Caco-2 (cell line): ENCODE measurements at regions of chr4 and their contacts with region 1.

Region 1: GRCh38 chr4:70687821-70688794 is at the start of gene UTP3:
- DNase-seq: peak; percentile 93 to 94
- H3K4me3 ChIP-seq: peak within 1 kb of the TSS; percentile 85
- H3K4me3 Mint-ChIP-seq: peak within 1 kb of the TSS; percentile 96
- H3K27ac Mint-ChIP-seq: peak within 1 kb of the TSS; percentile 88
- H3K4me1 ChIP-seq: peaks cover 6% of the 10 kb centered on the region; the same call in 1 of the 2 replicates
- H3K4me1 Mint-ChIP-seq: peaks cover 16% of the 10 kb centered on the region
- H3K27me3 ChIP-seq: no peaks in the 10 kb centered on the region
- H3K27me3 Mint-ChIP-seq: no peaks in the 10 kb centered on the region
- CTCF ChIP-seq: peak; percentile 77 to 89
- total RNA-seq, gene UTP3: 28.2 and 31.4 TPM in 2 replicates

Region 2: DNA sequence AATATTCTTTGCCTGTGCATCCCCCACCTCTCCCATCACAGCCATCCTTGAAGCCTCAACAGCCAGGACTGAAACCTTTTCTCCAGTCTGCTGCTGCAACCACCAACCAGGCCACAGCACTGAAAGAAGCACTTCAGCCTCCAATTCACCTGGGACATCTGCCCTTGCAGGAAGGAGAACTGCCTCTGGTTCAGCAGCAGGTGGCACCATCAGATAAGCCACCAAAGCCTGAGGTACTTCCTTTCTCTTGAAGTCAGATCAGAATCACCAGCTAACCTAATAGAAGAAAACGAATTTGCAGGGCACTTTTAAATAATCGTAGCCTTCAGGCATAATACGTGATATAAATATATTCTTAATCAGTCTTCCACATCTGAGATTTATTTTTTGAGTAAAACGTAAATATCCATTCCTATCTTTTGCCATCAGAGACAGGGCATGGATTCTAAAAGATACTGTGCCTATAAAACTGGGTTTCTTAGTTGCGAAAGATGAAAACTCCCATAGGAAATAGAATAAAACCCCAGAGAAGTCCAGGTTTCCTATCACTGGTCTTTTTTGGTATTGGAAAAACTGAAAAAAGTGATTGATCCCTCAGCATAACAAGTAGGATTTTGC is 86.6 kb before region 1 on chr4:
- CTCF ChIA-PET with region 1: no interaction called
- POLR2A ChIA-PET with region 1: no interaction called
- intact Hi-C with region 1: loop called (anchors 5 kb)
- DNase-seq: peak; percentile 64 to 69
- H3K4me3 ChIP-seq: no peak overlapping the region
- H3K4me3 Mint-ChIP-seq: no peak overlapping the region
- H3K27ac Mint-ChIP-seq: no peak overlapping the region
- H3K4me1 ChIP-seq: peaks cover 4% of the 10 kb centered on the region; the same call in 1 of the 2 replicates
- H3K4me1 Mint-ChIP-seq: peaks cover 6% of the 10 kb centered on the region
- H3K27me3 ChIP-seq: no peaks in the 10 kb centered on the region
- H3K27me3 Mint-ChIP-seq: no peaks in the 10 kb centered on the region
- CTCF ChIP-seq: peak; percentile 64 to 73

Region 3: GRCh38 chr4:70651864-70652506 is 36.1 kb before region 1 on chr4:
- CTCF ChIA-PET with region 1: no interaction called
- POLR2A ChIA-PET with region 1: no interaction called
- intact Hi-C with region 1: loop called (anchors 1 kb)
- DNase-seq: peak in 1 of 2 experiments; percentile 20
- H3K4me3 ChIP-seq: no peak overlapping the region
- H3K4me3 Mint-ChIP-seq: no peak overlapping the region
- H3K27ac Mint-ChIP-seq: no peak overlapping the region
- H3K4me1 ChIP-seq: peaks cover 3% of the 10 kb centered on the region; the same call in 1 of the 2 replicates
- H3K4me1 Mint-ChIP-seq: peaks cover 7% of the 10 kb centered on the region
- H3K27me3 ChIP-seq: no peaks in the 10 kb centered on the region
- H3K27me3 Mint-ChIP-seq: no peaks in the 10 kb centered on the region
- CTCF ChIP-seq: peak in 1 of 2 experiments; percentile 31

Region 4: GRCh38 chr4:70704331-70705145 is 16.4 kb after region 1 on chr4:
- CTCF ChIA-PET with region 1: interaction called, 8 read pairs
- POLR2A ChIA-PET with region 1: interaction called, 7 read pairs
- intact Hi-C with region 1: loop called (anchors 1 kb)
- DNase-seq: peak; percentile 88 to 90
- H3K4me3 ChIP-seq: peak overlapping the region; percentile 79
- H3K4me3 Mint-ChIP-seq: peak overlapping the region; percentile 98
- H3K27ac Mint-ChIP-seq: peak overlapping the region; percentile 98
- H3K4me1 ChIP-seq: peaks cover 11% of the 10 kb centered on the region
- H3K4me1 Mint-ChIP-seq: peaks cover 6% of the 10 kb centered on the region
- H3K27me3 ChIP-seq: no peaks in the 10 kb centered on the region
- H3K27me3 Mint-ChIP-seq: no peaks in the 10 kb centered on the region
- CTCF ChIP-seq: peak; percentile 30 to 63

Region 5: GRCh38 chr4:70839589-70840093 is 151.5 kb after region 1 on chr4 and contains the start of gene GRSF1:
- CTCF ChIA-PET with region 1: no interaction called
- POLR2A ChIA-PET with region 1: no interaction called
- intact Hi-C with region 1: loop called (anchors 1 kb)
- DNase-seq: peak; percentile 93 to 95
- H3K4me3 ChIP-seq: peak within 1 kb of the TSS; percentile 88
- H3K4me3 Mint-ChIP-seq: peak within 1 kb of the TSS; percentile 98
- H3K27ac Mint-ChIP-seq: peak within 1 kb of the TSS; percentile 90
- H3K4me1 ChIP-seq: no peaks in the 10 kb centered on the region
- H3K4me1 Mint-ChIP-seq: peaks cover 9% of the 10 kb centered on the region
- H3K27me3 ChIP-seq: no peaks in the 10 kb centered on the region
- H3K27me3 Mint-ChIP-seq: no peaks in the 10 kb centered on the region
- CTCF ChIP-seq: no peak
- total RNA-seq, gene GRSF1: 72.3 and 76.1 TPM in 2 replicates

Region 6: GRCh38 chr4:70880739-70881138 is 192.6 kb after region 1 on chr4:
- CTCF ChIA-PET with region 1: no interaction called
- POLR2A ChIA-PET with region 1: interaction called, 14 read pairs
- intact Hi-C with region 1: no loop called
- DNase-seq: no peak
- H3K4me3 ChIP-seq: no peak overlapping the region
- H3K4me3 Mint-ChIP-seq: no peak overlapping the region
- H3K27ac Mint-ChIP-seq: no peak overlapping the region
- H3K4me1 ChIP-seq: no peaks in the 10 kb centered on the region
- H3K4me1 Mint-ChIP-seq: no peaks in the 10 kb centered on the region
- H3K27me3 ChIP-seq: no peaks in the 10 kb centered on the region
- H3K27me3 Mint-ChIP-seq: no peaks in the 10 kb centered on the region
- CTCF ChIP-seq: no peak

Region 7: DNA sequence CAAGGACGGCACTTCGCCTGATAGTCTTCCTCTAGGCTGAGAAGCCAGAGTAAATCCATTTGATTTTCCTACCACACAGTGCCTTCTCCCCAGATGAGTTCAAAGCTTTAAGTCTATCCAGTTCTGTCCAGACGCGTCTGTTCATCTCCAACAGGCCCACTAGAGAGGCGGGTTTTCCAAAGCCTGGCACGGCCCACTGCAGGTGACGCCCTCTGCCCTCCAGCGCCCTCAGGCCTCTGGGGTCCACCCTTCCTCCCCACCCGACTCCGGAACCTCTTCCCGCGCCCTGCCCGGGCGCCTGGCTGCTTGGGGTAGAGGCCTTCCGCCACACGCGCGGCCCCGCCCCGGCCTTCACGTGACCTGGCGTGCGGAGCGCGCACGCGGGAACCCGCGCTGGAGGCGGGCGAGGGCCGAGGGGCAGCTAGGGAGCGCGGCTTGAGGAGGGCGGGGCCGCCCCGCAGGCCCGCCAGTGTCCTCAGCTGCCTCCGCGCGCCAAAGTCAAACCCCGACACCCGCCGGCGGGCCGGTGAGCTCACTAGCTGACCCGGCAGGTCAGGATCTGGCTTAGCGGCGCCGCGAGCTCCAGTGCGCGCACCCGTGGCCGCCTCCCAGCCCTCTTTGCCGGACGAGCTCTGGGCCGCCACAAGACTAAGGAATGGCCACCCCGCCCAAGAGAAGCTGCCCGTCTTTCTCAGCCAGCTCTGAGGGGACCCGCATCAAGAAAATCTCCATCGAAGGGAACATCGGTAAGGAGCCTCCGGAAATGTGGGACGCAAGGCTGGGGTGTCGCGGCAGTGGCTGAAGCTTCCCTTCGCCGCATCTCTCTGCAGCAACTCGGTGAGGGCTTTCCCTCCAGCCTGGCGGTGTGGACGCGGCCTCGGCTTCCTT is 305.3 kb after region 1 on chr4 and contains the start of gene DCK:
- CTCF ChIA-PET with region 1: no interaction called
- POLR2A ChIA-PET with region 1: no interaction called
- intact Hi-C with region 1: loop called (anchors 2 kb)
- DNase-seq: peak; percentile 93 to 96
- H3K4me3 ChIP-seq: peak within 1 kb of the TSS; percentile 83
- H3K4me3 Mint-ChIP-seq: peak within 1 kb of the TSS; percentile 91
- H3K27ac Mint-ChIP-seq: peak within 1 kb of the TSS; percentile 88
- H3K4me1 ChIP-seq: peaks cover 9% of the 10 kb centered on the region
- H3K4me1 Mint-ChIP-seq: peaks cover 18% of the 10 kb centered on the region
- H3K27me3 ChIP-seq: no peaks in the 10 kb centered on the region
- H3K27me3 Mint-ChIP-seq: no peaks in the 10 kb centered on the region
- CTCF ChIP-seq: no peak
- total RNA-seq, gene DCK: 16.3 and 19.6 TPM in 2 replicates